ENCODE measurements at regions of chr21 and their contacts with region 1.

Region 1: GRCh38 chr21:27371115-27371974 is 404.5 kb upstream of the ADAMTS5 start:
- DNase-seq: no peak

Region 2: GRCh38 chr21:27382404-27382803 is 11.1 kb after region 1 on chr21:
- intact Hi-C with region 1: no loop called
- DNase-seq: no peak

Region 3: DNA sequence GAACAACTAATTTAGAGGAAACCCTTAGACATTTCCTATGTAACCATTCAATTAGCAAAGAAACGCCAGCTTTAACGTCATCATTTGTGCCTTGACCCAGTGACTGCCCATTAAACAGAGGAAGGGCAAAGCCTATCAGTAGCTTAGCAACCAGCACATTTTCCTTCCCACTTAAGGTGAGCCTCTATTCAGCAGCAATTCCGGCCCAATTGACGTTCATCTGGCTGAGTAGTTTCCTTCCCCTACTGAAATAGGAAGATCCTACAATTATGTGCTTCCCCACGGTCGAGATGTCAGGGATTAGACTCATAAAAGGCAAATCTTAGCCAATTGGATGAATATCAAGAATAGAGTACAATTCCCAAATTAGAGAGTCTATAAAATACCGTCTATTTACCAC is 77.6 kb after region 1 on chr21:
- intact Hi-C with region 1: loop called (anchors 5 kb)
- DNase-seq: no peak

Region 4: DNA sequence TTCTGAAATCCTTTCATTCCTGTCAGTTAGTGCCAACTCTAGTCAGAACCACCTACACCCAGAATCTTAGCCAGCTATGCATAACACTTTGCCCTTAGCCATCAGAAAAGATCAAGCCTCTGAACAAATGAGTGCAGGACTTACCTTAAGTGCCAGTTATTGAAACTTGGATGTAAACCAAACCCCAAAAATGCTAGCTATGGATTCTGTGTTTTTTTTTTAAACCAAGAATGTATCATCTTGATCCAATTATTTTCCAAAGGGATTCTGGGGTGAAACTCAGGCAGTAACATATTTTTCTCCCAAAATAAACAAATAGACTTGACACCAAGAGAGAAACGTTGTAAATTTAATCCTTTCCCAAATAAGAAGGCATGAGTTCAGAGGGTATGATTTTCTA is 134.2 kb after region 1 on chr21:
- intact Hi-C with region 1: no loop called
- DNase-seq: no peak

Region 5: GRCh38 chr21:27526451-27526850 is 155.1 kb after region 1 on chr21:
- intact Hi-C with region 1: no loop called
- DNase-seq: no peak

Measured in cardiac septum (tissue), 1 donor.